ENCODE measurements at regions of chr7 and their contacts with region 1.

Region 1: DNA sequence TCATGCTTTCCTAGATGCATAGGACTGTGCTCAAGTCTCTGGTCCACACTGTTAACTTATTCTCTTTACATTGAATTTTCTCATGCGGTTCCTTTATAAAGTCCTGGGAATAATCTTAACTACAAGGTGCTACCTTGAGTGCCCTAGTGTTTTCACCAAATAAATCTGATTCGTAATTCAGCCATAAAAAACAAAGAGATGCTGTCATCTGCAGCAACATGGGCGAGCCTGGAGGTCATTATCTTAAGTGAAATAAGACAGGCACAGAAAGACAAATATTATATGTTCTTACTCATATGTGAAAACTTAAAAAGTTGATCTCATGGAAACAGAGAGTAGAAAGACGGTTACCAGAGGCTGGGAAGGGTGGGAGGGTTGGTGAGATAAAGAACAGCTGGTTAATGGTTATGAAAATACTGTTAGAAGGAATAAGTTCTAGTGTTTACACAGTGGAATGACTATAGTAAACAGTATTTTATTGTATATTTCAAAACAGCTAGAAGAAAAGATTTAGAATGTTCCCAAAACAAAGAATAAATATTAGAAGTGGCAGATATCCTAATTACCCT is 38.3 kb downstream of the NT5C3A start:
- DNase-seq: peak; percentile 32
- H3K4me3 ChIP-seq: no peak overlapping the region
- H3K27ac ChIP-seq: peak overlapping the region; percentile 41
- H3K27me3 ChIP-seq: no peaks in the 10 kb centered on the region
- CTCF ChIP-seq: no peak

Region 2: GRCh38 chr7:32896564-32897347 is 127.5 kb before region 1 on chr7:
- CTCF ChIA-PET with region 1: no interaction called
- POLR2A ChIA-PET with region 1: no interaction called
- DNase-seq: no peak
- H3K4me3 ChIP-seq: no peak overlapping the region
- H3K27ac ChIP-seq: no peak overlapping the region
- H3K27me3 ChIP-seq: peaks cover 5% of the 10 kb centered on the region
- CTCF ChIP-seq: no peak

Region 3: GRCh38 chr7:32937344-32938174 is 86.7 kb before region 1 on chr7:
- CTCF ChIA-PET with region 1: interaction called, 10 read pairs
- POLR2A ChIA-PET with region 1: no interaction called
- DNase-seq: no peak
- H3K4me3 ChIP-seq: no peak overlapping the region
- H3K27ac ChIP-seq: no peak overlapping the region
- H3K27me3 ChIP-seq: no peaks in the 10 kb centered on the region
- CTCF ChIP-seq: no peak

Region 4: GRCh38 chr7:33952824-33953223 is 928.6 kb after region 1 on chr7:
- CTCF ChIA-PET with region 1: no interaction called
- POLR2A ChIA-PET with region 1: no interaction called
- DNase-seq: no peak
- H3K4me3 ChIP-seq: no peak overlapping the region
- H3K27ac ChIP-seq: no peak overlapping the region
- H3K27me3 ChIP-seq: no peaks in the 10 kb centered on the region
- CTCF ChIP-seq: no peak

Measured in AG04450 (cell line).